Activated CD4-positive, alpha-beta T cell treated with anti-CD3 and anti-CD28 coated beads, Interleukin-2, amount 10 ng/mL, durations not matched to agents 7 days and 5 days (primary cell): ENCODE measurements at regions of chr1 and their contacts with region 1.

Region 1: GRCh38 chr1:239719642-239720258 is 333.4 kb downstream of the CHRM3 start:
- DNase-seq: peak; percentile 81
- H3K4me3 Mint-ChIP-seq: no peak overlapping the region
- H3K27ac Mint-ChIP-seq: peak overlapping the region; percentile 97
- H3K4me1 Mint-ChIP-seq: peaks cover 30% of the 10 kb centered on the region
- H3K27me3 Mint-ChIP-seq: no peaks in the 10 kb centered on the region

Region 2: DNA sequence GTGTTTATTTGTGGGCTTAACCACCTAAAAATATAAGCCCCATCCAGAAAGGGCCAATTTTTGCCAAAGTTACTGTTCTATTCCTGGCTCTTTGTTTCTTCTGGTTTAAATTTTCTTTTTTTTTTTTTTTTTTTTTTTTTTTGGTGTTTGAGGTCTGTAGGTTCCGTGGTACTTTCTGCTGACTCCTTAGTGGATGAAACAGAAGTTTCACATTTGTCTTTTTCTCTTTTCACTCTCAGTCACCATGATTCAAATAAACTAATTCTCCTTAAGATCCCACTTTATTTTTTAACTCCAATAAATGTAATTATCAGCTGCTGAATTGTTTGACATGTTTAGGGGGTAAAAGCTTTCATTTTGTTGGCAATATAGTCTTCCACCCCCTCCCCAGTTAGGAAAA is 11.1 kb before region 1 on chr1:
- CTCF ChIA-PET with region 1: interaction called, 13 read pairs
- POLR2A ChIA-PET with region 1: interaction called, 3 read pairs
- DNase-seq: no peak
- H3K4me3 Mint-ChIP-seq: no peak overlapping the region
- H3K27ac Mint-ChIP-seq: no peak overlapping the region
- H3K4me1 Mint-ChIP-seq: peaks cover 30% of the 10 kb centered on the region
- H3K27me3 Mint-ChIP-seq: no peaks in the 10 kb centered on the region